HEK293T (cell line): ENCODE measurements at regions of chr15 and their contacts with region 1.

Region 1: DNA sequence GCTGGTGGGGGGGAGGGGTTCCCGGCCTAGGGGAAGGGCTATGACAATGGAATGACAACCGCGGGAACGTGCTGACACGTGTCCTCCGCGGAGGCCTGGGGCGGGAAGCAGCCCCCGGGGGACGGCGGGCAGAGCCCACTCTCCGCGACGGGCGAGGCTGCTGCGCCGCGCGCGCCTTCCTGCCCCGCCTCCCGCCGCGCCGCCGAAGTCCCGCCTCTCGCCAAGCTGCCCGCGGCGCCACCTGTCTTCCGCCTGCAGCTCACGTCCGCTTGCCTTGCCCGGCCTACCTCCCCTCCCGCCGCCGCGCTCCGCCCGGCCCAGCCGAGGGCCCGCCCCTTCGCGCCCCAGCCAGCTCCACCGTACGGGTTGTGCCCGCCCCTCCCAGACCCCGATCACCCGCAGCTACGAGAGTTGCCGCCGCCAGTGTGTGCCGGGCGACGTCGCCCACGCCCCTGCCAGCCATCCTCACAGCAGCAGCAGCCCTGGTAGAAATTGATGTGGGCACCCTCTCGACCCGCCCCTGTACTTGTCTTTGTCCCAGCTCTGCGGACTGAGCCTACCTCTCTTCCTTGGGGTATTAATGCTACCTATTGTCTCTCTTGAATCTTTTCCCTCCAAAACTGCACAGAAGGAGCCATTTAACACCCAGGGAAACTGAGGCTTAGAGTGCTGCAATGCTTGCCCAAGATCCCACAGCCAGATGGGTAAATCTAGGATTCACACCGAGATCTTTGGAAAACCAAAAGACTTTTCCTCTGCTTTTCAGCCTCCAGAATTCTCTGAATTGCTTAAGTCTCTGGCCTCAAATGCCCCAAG is at the start of gene PARP16:
- DNase-seq: peak; percentile 86

Region 2: GRCh38 chr15:65184868-65185738 is 101.8 kb before region 1 on chr15 and contains the start of gene CLPX:
- CTCF ChIA-PET with region 1: no interaction called
- POLR2A ChIA-PET with region 1: interaction called, 18 read pairs
- DNase-seq: peak; percentile 82

Region 3: DNA sequence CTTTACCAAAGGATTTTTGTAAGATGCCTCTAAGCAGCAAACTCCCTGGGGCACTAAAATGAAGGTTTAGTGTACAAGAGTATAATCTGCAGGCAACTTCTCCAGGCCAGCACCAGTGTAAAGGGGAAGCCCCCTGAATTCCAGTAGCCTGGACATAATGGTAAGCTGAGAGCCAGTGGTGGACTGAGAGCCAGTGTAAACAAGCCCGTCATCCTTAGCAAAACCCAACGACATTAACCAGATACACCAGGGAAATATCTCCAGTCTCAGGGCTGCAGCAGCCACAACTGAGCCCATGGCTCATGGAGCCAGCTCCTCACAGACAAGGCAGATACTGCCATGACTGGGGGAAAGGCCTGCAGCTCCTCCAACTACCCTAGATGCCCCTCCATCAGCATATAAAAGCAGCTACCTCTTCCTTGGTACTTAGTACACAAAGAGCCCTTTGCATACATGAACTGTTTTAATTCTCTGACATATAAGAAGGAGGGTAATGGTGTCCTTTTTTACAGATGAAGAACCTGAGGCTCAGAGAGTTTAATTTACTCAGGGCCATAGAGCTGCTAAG is 22.0 kb before region 1 on chr15:
- CTCF ChIA-PET with region 1: no interaction called
- POLR2A ChIA-PET with region 1: interaction called, 16 read pairs
- DNase-seq: no peak

Region 4: DNA sequence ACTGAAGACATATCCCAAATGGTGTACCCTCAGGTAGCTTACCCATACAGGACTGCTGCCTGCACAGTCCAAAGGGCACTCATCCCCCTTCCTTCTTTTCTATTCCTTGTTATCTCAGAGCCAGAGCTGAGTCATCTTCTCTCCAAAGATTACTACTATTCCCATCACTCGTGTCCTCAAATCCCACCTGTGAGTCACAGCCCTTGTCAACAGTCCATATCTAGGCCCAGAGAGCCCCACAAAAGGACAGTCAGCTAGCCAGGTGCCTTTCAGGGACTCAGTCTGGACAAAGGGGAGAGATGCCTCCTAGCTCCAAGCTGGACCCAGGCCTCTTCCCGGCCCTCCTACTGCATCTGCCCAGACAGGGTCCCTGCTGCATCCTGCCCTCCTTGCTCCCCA is 11.2 kb before region 1 on chr15:
- CTCF ChIA-PET with region 1: interaction called, 4 read pairs
- POLR2A ChIA-PET with region 1: interaction called, 38 read pairs
- DNase-seq: no peak

Region 5: DNA sequence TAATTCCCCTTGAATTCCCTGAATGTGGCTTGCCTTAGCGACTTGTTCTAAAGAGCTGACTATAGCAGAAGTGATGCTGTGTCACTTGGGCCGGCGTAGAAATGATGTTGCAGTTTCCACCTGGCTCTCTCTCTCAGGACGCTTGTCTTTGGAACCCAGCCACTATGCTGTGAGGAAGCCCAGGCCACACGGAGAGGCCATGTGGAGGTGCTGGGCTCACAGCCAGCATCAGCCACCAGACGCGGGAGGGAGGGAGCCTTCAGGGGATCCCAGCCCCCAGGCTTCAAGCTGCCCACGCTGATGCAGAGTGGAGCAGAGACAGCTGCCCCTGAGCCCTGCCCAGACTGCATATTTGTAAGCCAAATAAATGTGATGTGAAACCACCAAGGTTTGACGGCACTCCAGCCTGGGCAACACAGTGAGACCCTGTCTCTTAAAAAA is 36.2 kb after region 1 on chr15:
- CTCF ChIA-PET with region 1: no interaction called
- POLR2A ChIA-PET with region 1: no interaction called
- DNase-seq: no peak